ENCODE measurements at regions of chr20 and their contacts with region 1.

Region 1: GRCh38 chr20:38321959-38322598 is 18.1 kb downstream of the BPI start:
- DNase-seq: peak; percentile 75
- ATAC-seq: peak; percentile 79
- H3K4me3 ChIP-seq: no peak overlapping the region
- H3K27ac ChIP-seq: no peak overlapping the region
- H3K4me1 ChIP-seq: 0 out of 2 replicates have a peak, but pooled peaks cover 3% of the 10 kb centered on the region
- H3K27me3 ChIP-seq: no peaks in the 10 kb centered on the region
- CTCF ChIP-seq: peak; percentile 92

Region 2: GRCh38 chr20:38290832-38291581 is 31.1 kb before region 1 on chr20:
- CTCF ChIA-PET with region 1: no interaction called
- POLR2A ChIA-PET with region 1: no interaction called
- intact Hi-C with region 1: loop called (anchors 1 kb)
- DNase-seq: peak; percentile 58
- ATAC-seq: peak; percentile 86
- H3K4me3 ChIP-seq: peak overlapping the region; percentile 13
- H3K27ac ChIP-seq: no peak overlapping the region
- H3K4me1 ChIP-seq: no peaks in the 10 kb centered on the region
- H3K27me3 ChIP-seq: no peaks in the 10 kb centered on the region
- CTCF ChIP-seq: peak; percentile 85

Region 3: DNA sequence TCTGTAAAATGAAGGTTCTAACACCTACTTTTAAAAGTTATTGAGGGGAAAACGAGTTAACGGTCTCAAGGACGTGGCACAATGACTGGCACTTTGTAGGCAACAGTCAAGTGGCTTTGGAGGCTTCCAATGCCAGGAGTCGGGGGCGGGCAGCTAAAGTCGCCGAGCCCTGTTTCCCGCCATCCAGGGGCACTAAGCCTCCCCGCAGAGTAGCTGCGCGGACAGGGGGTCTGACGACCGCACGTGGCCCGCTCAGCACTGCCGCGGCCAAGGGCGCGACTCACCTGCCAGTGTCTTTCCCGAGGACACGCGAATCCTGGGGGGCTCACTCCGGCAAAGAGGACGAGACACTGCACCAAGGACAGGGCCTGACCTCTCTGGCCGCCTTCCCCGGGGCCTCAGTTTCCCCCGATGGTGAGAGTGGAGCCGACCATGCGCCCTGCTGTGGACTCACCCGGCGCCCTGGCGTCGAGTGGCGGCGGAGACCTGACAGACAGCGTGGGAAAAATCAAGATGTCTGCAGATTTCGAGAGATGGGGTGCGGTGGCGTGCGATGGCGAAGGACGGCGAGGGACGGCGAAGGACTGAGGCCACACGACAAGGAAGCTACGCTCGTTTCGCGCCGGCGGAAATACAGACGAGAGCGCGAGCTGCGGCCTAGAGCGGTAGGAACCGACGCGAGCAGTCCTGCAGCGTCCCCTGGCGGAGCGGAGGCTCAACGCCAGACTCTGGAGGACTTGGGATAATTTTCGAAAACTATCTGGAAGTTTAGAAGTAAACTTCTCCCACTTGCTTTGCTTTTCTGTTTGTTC is 112.9 kb after region 1 on chr20 and contains the start of gene SNHG17:
- CTCF ChIA-PET with region 1: no interaction called
- POLR2A ChIA-PET with region 1: no interaction called
- intact Hi-C with region 1: no loop called
- DNase-seq: peak; percentile 94
- ATAC-seq: peak; percentile 84
- H3K4me3 ChIP-seq: peak within 1 kb of the TSS; percentile 95
- H3K27ac ChIP-seq: peak within 1 kb of the TSS; percentile 56
- H3K4me1 ChIP-seq: peaks cover 26% of the 10 kb centered on the region
- H3K27me3 ChIP-seq: no peaks in the 10 kb centered on the region
- CTCF ChIP-seq: peak; percentile 99
- total RNA-seq, gene SNHG17: 52.0 and 62.0 TPM in 2 replicates

Measured in PC-3 (cell line).